ENCODE measurements at regions of chr3 and their contacts with region 1.

Region 1: DNA sequence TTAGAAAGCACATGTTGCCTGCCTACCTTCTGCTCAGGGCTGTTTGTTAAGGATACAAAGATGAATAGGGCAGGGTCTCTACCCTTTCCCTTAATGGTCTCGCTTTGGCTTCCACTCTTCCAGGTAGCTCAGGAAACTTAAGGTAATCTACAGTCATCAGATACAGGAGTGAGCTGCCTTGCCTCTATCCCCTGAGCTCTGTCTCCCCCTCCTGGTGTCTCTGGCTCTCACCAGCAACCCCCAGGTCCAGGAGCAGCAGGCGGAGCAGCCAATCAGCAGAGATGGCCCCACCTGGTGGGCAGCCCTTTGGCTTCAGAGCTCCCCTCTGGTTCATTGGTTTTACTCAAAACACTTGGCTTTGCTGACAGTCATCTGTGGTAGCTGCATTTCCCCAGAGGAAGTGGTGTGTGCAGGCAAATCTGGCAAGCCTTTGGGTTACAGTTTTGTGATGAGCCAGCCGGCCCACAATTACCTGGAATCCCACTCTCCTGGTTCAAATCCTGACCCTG is 8.5 kb upstream of the CX3CR1 start:
- DNase-seq: peak; percentile 75
- H3K4me3 Mint-ChIP-seq: no peak overlapping the region
- H3K27ac Mint-ChIP-seq: peak overlapping the region; percentile 56
- H3K4me1 Mint-ChIP-seq: peaks cover 43% of the 10 kb centered on the region
- H3K27me3 Mint-ChIP-seq: no peaks in the 10 kb centered on the region

Region 2: DNA sequence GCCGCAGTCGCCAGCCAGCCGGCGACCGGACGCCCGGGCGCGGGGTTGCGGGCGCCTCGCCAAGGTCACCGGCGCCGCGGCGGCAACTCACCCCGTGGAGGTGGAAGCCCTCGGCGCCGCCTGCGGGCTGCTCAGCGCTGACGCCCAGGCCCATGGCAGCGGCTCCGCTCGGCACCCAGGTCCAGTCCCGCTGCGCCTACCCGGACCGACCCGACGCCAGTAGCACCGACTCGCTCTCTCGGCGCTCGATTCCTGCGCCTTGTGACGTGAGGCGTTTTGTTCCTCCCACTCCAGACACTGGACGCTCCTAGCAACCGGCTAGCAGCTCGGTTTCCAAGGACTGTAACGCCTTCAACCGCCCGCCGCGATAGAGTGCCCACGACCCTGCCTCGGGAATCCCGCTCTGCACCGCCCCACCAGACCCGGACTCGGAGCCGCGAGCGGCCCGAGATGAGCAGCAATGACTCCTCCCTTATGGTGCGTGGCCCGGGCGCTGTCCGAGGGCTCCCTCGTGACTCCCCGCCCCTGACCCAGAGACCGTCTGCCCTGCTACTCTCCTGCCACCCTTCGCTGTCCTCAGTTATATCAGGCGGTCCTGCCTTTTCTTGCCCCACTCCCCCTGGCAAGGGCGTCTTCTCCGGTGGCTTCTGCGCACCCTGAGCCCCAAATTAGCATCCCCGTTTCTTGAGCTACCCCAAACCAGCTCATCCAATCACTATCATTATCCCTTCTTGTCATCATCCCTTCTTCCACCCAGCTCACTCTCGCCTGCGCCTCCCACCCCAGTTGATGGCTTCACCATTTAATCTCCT is 180.8 kb before region 1 on chr3 and contains the starts of genes GORASP1 and TTC21A:
- intact Hi-C with region 1: loop called (anchors 5 kb)
- DNase-seq: peak; percentile 55
- H3K4me3 Mint-ChIP-seq: peak within 1 kb of the TSS; percentile 93
- H3K27ac Mint-ChIP-seq: peak within 1 kb of the TSS; percentile 54
- H3K4me1 Mint-ChIP-seq: peaks cover 29% of the 10 kb centered on the region
- H3K27me3 Mint-ChIP-seq: peaks cover 3% of the 10 kb centered on the region
- total RNA-seq, gene GORASP1: 31.8 and 32.6 TPM in 2 replicates
- total RNA-seq, gene TTC21A: 0.55 TPM in 2 replicates

Region 3: DNA sequence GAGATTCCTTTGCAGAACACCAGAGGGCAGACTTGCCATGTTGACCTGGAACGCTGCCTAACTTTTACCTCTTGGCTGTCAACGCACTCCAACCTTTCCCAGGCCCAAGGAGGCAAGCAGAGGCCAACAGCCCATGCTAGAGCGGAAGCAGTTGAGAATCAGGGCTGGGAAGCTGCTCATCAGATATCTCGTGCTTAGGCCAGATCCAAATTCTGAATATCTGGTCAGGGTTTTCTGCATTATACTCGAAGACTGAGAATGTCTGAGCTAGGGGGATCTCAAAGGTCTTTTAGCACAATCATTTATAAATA is 98.4 kb before region 1 on chr3:
- intact Hi-C with region 1: loop called (anchors 1 kb)
- DNase-seq: peak; percentile 54
- H3K4me3 Mint-ChIP-seq: no peak overlapping the region
- H3K27ac Mint-ChIP-seq: no peak overlapping the region
- H3K4me1 Mint-ChIP-seq: peaks cover 24% of the 10 kb centered on the region
- H3K27me3 Mint-ChIP-seq: no peaks in the 10 kb centered on the region

Region 4: GRCh38 chr3:39208463-39209055 is 79.8 kb before region 1 on chr3:
- intact Hi-C with region 1: loop called (anchors 1 kb)
- DNase-seq: no peak
- H3K4me3 Mint-ChIP-seq: no peak overlapping the region
- H3K27ac Mint-ChIP-seq: no peak overlapping the region
- H3K4me1 Mint-ChIP-seq: peaks cover 10% of the 10 kb centered on the region
- H3K27me3 Mint-ChIP-seq: peaks cover 25% of the 10 kb centered on the region

Region 5: DNA sequence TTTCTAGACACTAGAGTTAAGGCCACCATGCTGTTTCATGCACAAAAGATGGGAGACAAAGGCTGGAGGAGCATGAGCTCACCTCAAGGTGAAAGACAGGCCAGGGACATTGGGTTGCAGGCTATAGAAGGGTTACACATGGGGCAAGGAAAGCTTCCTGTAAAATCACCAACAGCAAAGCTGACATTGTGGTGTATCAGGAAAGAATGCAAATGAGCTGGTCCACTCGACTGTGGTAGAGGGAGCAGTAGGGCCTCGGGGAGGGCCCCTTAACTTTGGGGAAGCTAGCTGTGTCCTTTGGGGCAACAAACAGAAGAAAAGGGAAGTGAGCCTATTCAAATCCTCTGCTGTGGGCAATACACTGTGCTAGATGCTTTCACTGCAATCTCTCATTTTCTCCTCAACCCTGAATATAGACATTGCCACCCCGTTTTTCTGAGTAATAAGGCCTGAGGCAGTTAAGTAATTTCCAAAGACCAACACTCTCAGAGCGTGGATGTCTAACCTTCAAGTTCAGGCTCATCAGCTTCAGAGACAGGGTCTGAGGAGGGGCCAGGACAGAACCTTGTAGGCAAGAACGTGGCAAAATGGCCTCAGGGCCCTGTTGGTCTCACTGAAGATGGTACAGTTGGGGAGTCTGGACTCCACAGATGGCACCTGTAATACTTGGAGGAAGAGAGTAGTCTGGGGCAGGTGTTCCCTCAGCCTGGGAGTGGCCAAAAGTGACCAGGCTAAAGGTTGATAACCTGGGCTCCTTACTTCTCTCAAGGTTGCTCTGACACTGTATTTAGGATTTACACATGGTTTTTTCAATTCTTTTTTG is 32.6 kb before region 1 on chr3:
- intact Hi-C with region 1: loop called (anchors 2 kb)
- DNase-seq: no peak
- H3K4me3 Mint-ChIP-seq: no peak overlapping the region
- H3K27ac Mint-ChIP-seq: peak overlapping the region; percentile 79
- H3K4me1 Mint-ChIP-seq: peaks cover 55% of the 10 kb centered on the region
- H3K27me3 Mint-ChIP-seq: no peaks in the 10 kb centered on the region

Region 6: GRCh38 chr3:39267631-39268548 is 20.5 kb before region 1 on chr3:
- intact Hi-C with region 1: loop called (anchors 1 kb)
- DNase-seq: peak; percentile 74
- H3K4me3 Mint-ChIP-seq: peak overlapping the region; percentile 37
- H3K27ac Mint-ChIP-seq: peak overlapping the region; percentile 97
- H3K4me1 Mint-ChIP-seq: peaks cover 52% of the 10 kb centered on the region
- H3K27me3 Mint-ChIP-seq: no peaks in the 10 kb centered on the region

Region 7: GRCh38 chr3:39378088-39378487 is 89.7 kb after region 1 on chr3:
- intact Hi-C with region 1: loop called (anchors 1 kb)
- DNase-seq: peak; percentile 57
- H3K4me3 Mint-ChIP-seq: no peak overlapping the region
- H3K27ac Mint-ChIP-seq: peak overlapping the region; percentile 34
- H3K4me1 Mint-ChIP-seq: peaks cover 20% of the 10 kb centered on the region
- H3K27me3 Mint-ChIP-seq: no peaks in the 10 kb centered on the region

Measured in activated T-helper 2 cell treated with anti-CD3 and anti-CD28 coated beads, Interferon-gamma antibody, Interleukin-2, Interleukin-4, amounts not matched to agents 10 μg/mL and 5 μg/mL and 100 μg/mL, durations not matched to agents 14 hours and 24 hours and 36 hours (primary cell).